HEK293 (cell line): ENCODE measurements at regions of chr3 and their contacts with region 1.

Region 1: DNA sequence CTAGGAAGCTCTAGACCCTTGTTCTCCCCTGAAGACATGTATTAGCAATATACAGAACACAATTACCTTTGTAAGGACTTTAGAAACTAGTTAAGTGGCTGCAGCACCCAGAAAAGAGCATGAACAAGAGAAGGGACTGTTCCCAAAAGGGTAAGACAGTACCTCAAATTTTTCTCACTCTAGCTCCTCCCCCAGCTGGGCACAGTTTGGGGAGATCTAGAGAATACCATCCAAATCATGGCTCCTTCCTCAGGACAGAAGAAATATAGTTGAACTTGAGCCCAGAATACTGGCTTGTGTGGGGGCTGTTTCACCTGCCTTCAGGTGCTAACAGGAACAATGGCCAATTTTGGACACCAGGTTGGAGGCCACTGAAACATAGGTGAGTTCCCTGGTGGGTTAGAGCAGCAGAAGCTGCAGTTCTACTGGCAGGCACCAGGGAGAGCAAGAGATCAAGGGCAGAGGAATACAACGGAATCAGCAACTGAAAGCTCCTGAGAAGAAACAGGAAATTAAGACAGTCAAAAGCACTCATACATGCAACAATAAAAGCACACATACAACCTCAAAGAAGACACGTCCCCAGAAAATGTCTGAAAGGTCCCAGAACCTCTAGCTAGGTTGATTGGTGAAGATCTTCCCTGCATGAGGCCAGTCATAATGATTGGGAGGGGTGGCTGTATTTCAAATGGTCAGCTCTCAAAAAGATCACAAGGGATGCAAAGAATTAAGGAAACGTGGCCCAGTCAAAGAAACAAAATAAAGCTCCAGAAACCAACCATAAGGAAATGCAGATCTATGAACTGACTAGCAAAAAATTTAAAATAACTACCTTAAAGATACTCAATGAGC is 104.9 kb upstream of the ASB14 start:
- H3K4me3 ChIP-seq: no peak overlapping the region
- H3K27ac ChIP-seq: no peak overlapping the region
- H3K4me1 ChIP-seq: no peaks in the 10 kb centered on the region
- CTCF ChIP-seq: 0 out of 2 replicates have a peak, but pooled peaks have one; percentile 19

Region 2: GRCh38 chr3:57252404-57252803 is 145.0 kb before region 1 on chr3:
- CTCF ChIA-PET with region 1: no interaction called
- POLR2A ChIA-PET with region 1: no interaction called
- H3K4me3 ChIP-seq: no peak overlapping the region
- H3K27ac ChIP-seq: no peak overlapping the region
- H3K4me1 ChIP-seq: peaks cover 3% of the 10 kb centered on the region
- CTCF ChIP-seq: no peak

Region 3: DNA sequence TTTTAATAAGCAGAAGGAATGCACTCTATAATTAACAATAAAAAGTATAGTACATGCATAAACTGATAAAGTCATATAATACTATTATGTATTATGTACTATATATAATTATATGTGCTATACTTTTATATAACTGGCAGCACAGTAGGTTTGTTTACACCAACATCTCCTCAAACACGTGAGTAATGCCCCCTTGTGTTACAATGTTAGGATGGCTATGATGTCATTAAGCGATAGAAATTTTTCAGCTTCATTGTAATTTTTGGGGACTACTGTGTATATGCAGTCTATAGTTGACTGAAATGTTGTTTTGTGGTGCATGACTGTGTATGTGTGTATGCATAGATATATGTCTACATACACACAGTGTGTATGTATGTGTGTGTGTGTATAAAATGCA is 459.3 kb after region 1 on chr3:
- CTCF ChIA-PET with region 1: interaction called, 12 read pairs
- POLR2A ChIA-PET with region 1: no interaction called
- H3K4me3 ChIP-seq: no peak overlapping the region
- H3K27ac ChIP-seq: no peak overlapping the region
- H3K4me1 ChIP-seq: no peaks in the 10 kb centered on the region
- CTCF ChIP-seq: no peak